Panc1 (cell line): ENCODE measurements at regions of chr20 and their contacts with region 1.

Region 1: GRCh38 chr20:32052778-32053362 is 828 bp downstream of the HCK start:
- DNase-seq: no peak
- ATAC-seq: 0 out of 2 replicates have a peak, but pooled peaks have one; percentile 22
- H3K4me3 ChIP-seq: peak overlapping the region; percentile 38 to 39
- H3K27ac ChIP-seq: no peak overlapping the region
- H3K4me1 ChIP-seq: no peaks in the 10 kb centered on the region
- H3K27me3 ChIP-seq: peaks cover 17% of the 10 kb centered on the region
- CTCF ChIP-seq: no peak

Region 2: DNA sequence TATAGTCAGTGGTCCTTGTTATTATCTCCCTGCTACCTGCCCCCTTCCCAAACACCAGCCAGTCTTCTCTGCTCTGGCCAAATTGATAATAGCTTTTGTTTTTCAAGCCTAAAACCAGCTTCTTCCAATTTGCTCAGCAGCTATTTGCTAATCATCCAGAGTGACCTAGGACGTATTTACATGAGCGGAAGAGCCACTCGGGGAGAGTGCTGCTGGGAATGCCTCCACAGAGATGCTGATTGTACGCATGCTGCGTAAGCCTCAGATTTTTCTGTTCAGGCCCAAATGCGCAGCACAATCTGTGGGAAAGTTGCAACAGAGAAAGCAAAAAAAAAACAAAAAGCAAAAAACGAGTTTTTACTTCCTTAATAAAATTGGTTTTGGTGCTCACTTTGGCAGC is 472.2 kb before region 1 on chr20:
- CTCF ChIA-PET with region 1: interaction called, 15 read pairs
- POLR2A ChIA-PET with region 1: no interaction called
- in situ Hi-C with region 1: no loop called
- intact Hi-C with region 1: no loop called
- DNase-seq: no peak
- ATAC-seq: no peak
- H3K4me3 ChIP-seq: no peak overlapping the region
- H3K27ac ChIP-seq: no peak overlapping the region
- H3K4me1 ChIP-seq: peaks cover 9% of the 10 kb centered on the region
- H3K27me3 ChIP-seq: no peaks in the 10 kb centered on the region
- CTCF ChIP-seq: no peak

Region 3: GRCh38 chr20:31811796-31812728 is 240.8 kb before region 1 on chr20:
- CTCF ChIA-PET with region 1: no interaction called
- POLR2A ChIA-PET with region 1: interaction called, 12 read pairs
- in situ Hi-C with region 1: no loop called
- intact Hi-C with region 1: no loop called
- DNase-seq: no peak
- ATAC-seq: peak; percentile 7; the same call in 1 of the 2 replicates
- H3K4me3 ChIP-seq: no peak overlapping the region
- H3K27ac ChIP-seq: no peak overlapping the region
- H3K4me1 ChIP-seq: peaks cover 40% of the 10 kb centered on the region
- H3K27me3 ChIP-seq: no peaks in the 10 kb centered on the region
- CTCF ChIP-seq: no peak

Region 4: DNA sequence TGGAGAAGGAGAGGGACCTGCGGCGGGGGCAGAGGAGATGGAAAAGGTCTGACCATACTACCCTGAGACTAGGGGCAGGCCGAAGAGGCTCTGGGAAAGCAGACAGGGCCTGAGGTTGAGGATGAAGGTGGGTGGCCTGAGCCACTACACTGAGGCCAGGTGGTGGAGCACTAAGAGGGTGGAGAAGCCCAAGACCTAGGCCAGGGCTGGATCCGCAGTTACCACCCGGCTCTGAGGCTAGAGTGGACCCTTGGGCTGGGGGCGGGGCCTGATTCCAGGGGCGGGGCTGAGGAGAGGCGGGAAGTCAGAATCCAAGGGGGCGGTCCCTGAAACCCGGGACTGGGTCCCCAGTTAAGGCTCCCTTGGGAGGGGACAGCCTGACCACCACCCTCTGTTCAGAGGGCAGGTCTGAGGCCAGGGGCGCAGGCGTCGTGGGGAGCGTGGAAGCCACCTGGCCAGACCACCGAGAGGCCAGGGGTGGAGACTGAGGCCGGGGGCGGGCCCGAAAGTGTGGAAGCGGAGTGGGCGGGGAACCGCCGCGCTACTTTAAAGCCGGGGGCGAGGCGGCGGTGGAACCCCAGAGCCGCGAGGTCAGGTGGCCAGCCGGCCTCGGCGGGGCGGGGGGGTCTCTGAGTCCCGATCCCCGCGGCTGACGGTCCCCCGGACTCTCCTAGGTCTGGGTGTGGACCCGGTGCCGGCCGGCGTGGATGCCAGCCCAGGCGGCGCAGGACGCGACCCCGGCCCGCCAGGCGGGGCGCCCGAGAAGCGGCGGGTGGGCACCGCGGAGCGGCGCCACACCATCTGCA is 34.4 kb before region 1 on chr20:
- CTCF ChIA-PET with region 1: no interaction called
- POLR2A ChIA-PET with region 1: interaction called, 18 read pairs
- in situ Hi-C with region 1: no loop called
- intact Hi-C with region 1: no loop called
- DNase-seq: no peak
- ATAC-seq: peak; percentile 91
- H3K4me3 ChIP-seq: peak overlapping the region; percentile 52 to 65
- H3K27ac ChIP-seq: peak overlapping the region; percentile 52; the same call in 1 of the 2 replicates
- H3K4me1 ChIP-seq: peaks cover 19% of the 10 kb centered on the region
- H3K27me3 ChIP-seq: peaks cover 11% of the 10 kb centered on the region; the same call in 1 of the 2 replicates
- CTCF ChIP-seq: no peak

Region 5: GRCh38 chr20:32564921-32565734 is 512.3 kb after region 1 on chr20:
- CTCF ChIA-PET with region 1: no interaction called
- POLR2A ChIA-PET with region 1: no interaction called
- in situ Hi-C with region 1: no loop called
- intact Hi-C with region 1: no loop called
- DNase-seq: no peak
- ATAC-seq: no peak
- H3K4me3 ChIP-seq: no peak overlapping the region
- H3K27ac ChIP-seq: no peak overlapping the region
- H3K4me1 ChIP-seq: peaks cover 4% of the 10 kb centered on the region
- H3K27me3 ChIP-seq: no peaks in the 10 kb centered on the region
- CTCF ChIP-seq: no peak